WTC11 (cell line): ENCODE measurements at regions of chr16 and their contacts with region 1.

Region 1: DNA sequence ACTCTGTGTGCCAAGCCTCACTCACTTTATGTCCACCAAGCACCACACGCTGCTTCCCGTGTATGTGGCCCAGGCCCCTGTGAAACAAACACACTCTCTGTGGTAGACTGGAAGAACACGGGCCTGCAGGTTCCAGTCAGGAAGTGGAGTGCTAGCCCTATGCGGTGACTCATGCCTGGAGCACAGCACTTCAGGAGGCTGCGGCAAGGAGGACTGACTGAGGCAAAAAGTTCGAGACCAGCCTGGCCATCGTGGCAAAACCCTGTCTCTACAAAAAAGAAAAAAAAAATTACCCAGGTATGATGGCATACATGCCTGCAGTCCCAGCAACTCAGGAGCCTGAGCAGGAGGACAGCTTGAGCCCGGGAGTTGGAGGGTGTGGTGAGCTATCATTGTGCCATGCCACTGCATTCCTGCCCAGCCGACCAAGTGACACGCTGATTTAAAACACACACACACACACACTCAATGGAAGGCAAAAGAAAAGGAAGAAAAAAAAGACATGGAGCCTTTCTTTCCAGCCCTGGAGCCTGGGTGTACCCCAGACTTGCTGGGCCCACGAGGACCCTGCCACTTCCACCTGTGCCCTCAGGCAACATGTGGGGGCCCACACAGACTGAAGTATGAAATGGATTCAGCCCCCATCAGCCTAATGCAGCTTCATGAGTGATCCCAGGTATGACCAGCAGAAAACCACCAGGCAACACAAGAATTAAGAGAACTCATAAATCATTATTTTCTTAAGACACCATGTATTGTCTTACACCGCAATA is 126.6 kb downstream of the ANKRD11 start:
- DNase-seq: no peak
- ATAC-seq: peak; percentile 27
- H3K4me3 Mint-ChIP-seq: peak overlapping the region; percentile 40; the same call in 1 of the 2 replicates
- H3K27ac Mint-ChIP-seq: peak overlapping the region; percentile 98
- H3K4me1 Mint-ChIP-seq: peaks cover 74% of the 10 kb centered on the region
- H3K27me3 Mint-ChIP-seq: no peaks in the 10 kb centered on the region
- CTCF ChIP-seq: no peak

Region 2: GRCh38 chr16:89283449-89283848 is 80.4 kb before region 1 on chr16:
- CTCF ChIA-PET with region 1: no interaction called
- POLR2A ChIA-PET with region 1: no interaction called
- DNase-seq: no peak
- ATAC-seq: no peak
- H3K4me3 Mint-ChIP-seq: no peak overlapping the region
- H3K27ac Mint-ChIP-seq: no peak overlapping the region
- H3K4me1 Mint-ChIP-seq: no peaks in the 10 kb centered on the region
- H3K27me3 Mint-ChIP-seq: no peaks in the 10 kb centered on the region
- CTCF ChIP-seq: no peak

Region 3: GRCh38 chr16:89374393-89374960 is 10.7 kb after region 1 on chr16:
- CTCF ChIA-PET with region 1: interaction called, 10 read pairs
- POLR2A ChIA-PET with region 1: interaction called, 3 read pairs
- DNase-seq: peak; percentile 52
- ATAC-seq: peak; percentile 80
- H3K4me3 Mint-ChIP-seq: no peak overlapping the region
- H3K27ac Mint-ChIP-seq: peak overlapping the region; percentile 87
- H3K4me1 Mint-ChIP-seq: peaks cover 75% of the 10 kb centered on the region
- H3K27me3 Mint-ChIP-seq: no peaks in the 10 kb centered on the region
- CTCF ChIP-seq: no peak